Right ventricle myocardium inferior (tissue), 1 donor: ENCODE measurements at regions of chr13 and their contacts with region 1.

Region 1: DNA sequence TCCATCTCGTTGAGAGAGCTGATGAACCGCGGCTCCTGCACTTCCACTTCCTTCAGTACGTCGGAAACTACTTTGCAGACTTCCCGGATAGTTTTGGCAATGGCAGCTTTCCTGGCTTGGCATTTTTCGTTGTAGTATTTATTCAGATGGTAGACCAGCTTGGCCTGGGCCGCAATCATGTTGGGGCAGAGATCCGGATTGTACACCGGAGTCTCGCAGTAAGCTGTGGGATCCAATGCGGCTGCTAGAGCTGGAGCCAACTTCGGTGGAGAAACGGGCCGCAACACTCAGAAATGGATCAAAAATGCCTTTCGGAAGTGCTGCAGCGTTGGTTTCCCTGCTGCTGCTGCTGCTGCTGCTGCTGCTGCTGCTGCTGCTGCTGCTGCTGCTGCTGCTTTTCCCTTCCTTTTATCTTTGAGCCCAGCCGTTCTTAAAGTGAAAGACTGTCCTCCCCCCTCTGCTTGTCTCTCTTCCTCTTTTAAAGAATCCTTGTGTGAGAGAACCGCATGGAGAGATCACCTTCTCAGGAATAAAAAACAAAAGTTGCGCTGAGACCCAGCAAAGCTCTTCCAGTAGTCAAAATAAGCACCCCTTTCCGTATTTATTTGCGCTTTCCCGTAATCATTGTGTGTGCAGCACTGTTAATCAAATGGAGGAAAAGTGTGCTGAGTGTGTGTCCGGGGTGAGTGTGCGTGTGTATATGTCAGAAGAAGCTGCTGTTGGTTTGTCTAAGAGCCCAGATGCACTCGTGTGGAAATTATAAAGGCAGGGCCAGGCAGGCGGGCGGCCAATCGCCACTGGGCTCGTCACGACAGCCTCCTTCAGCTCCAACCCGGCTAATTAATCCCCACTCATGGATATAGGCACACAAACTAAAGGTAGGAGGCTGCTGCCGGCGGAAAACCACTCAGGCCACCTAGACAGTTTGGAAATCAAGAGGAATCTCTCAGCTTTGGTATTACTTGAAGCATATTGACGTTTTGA is at the start of gene MAB21L1:
- DNase-seq: peak; percentile 56
- ATAC-seq: peak; percentile 34
- total RNA-seq, gene MAB21L1: 0.35 TPM

Region 2: GRCh38 chr13:35349673-35350278 is 126.5 kb before region 1 on chr13:
- intact Hi-C with region 1: loop called (anchors 10 kb)
- DNase-seq: no peak
- ATAC-seq: peak; percentile 76